Naive thymus-derived CD4-positive, alpha-beta T cell (primary cell): ENCODE measurements at regions of chr2 and their contacts with region 1.

Region 1: DNA sequence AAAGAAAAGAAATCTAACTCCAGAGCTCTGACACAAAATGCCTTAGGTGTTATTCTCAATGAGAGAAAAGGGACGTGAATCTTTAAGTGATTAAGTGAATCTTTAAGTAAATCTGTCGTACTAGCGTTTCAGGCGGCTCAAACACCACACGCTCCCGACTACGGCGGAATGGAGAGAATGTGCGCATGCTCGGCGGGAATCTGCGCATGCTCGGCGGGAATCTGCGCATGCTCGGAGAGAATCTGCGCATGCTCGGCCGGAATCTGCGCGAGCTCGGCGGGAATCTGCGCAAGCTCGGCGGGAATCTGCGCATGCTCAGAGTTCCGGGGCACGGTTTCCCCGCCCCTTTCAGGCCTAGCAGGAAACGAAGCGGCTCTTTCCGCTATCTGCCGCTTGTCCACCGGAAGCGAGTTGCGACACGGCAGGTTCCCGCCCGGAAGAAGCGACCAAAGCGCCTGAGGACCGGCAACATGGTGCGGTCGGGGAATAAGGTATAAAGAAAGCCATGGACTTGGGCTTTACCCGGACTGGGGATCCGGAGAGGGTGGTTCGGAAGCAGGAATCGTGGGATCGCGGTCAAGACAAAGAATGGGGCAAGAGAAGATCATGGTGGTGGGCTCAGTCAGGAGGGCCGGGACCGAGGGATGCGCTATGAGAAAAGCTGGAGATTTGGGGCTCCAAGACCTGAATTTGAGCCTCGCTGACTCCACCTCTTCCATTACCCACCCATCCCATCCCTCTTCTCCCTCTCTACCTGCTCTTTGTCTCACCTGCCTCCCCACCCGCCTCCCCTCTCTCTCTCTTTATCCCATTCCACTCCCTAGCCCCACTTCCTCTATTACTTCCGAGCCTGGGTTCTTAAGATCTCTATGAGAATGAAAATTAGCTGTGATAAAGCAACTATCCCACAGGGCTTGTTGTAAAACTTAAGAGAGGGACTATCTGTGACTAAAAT is at the start of gene XRCC5:
- DNase-seq: peak; percentile 95 to 97 (median 97)
- ATAC-seq: peak; percentile 93
- H3K4me3 ChIP-seq: peak within 1 kb of the TSS; percentile 96
- H3K4me3 Mint-ChIP-seq: peak within 1 kb of the TSS; percentile 96 to 100 (median 100)
- H3K27ac ChIP-seq: peak within 1 kb of the TSS; percentile 95
- H3K27ac Mint-ChIP-seq: peak within 1 kb of the TSS; percentile 97 to 100 (median 100)
- H3K4me1 ChIP-seq: peaks cover 24 to 30% of the 10 kb centered on the region in 2 donors
- H3K4me1 Mint-ChIP-seq: peaks cover 20 to 57% (median 52%) of the 10 kb centered on the region in 7 donors
- H3K27me3 ChIP-seq: no peaks in the 10 kb centered on the region
- H3K27me3 Mint-ChIP-seq: peaks cover 0 to 4% (median 0%) of the 10 kb centered on the region in 5 donors
- total RNA-seq, gene XRCC5: 168 to 347 (median 228) TPM

Region 2: GRCh38 chr2:216034065-216034464 is 75.2 kb before region 1 on chr2:
- CTCF ChIA-PET with region 1: interaction called, 7 read pairs
- POLR2A ChIA-PET with region 1: interaction called, 3 read pairs
- intact Hi-C with region 1: loop called (anchors 1 kb)
- DNase-seq: peak; percentile 50 to 83 (median 69)
- ATAC-seq: peak; percentile 89
- H3K4me3 ChIP-seq: no peak overlapping the region
- H3K4me3 Mint-ChIP-seq: no peak overlapping the region
- H3K27ac ChIP-seq: no peak overlapping the region
- H3K27ac Mint-ChIP-seq: peak overlapping the region in 1 of 9 donors; percentile 13
- H3K4me1 ChIP-seq: peaks cover 0 to 10% of the 10 kb centered on the region in 2 donors
- H3K4me1 Mint-ChIP-seq: peaks cover 15 to 31% (median 25%) of the 10 kb centered on the region in 7 donors
- H3K27me3 ChIP-seq: no peaks in the 10 kb centered on the region
- H3K27me3 Mint-ChIP-seq: no peaks in the 10 kb centered on the region

Region 3: DNA sequence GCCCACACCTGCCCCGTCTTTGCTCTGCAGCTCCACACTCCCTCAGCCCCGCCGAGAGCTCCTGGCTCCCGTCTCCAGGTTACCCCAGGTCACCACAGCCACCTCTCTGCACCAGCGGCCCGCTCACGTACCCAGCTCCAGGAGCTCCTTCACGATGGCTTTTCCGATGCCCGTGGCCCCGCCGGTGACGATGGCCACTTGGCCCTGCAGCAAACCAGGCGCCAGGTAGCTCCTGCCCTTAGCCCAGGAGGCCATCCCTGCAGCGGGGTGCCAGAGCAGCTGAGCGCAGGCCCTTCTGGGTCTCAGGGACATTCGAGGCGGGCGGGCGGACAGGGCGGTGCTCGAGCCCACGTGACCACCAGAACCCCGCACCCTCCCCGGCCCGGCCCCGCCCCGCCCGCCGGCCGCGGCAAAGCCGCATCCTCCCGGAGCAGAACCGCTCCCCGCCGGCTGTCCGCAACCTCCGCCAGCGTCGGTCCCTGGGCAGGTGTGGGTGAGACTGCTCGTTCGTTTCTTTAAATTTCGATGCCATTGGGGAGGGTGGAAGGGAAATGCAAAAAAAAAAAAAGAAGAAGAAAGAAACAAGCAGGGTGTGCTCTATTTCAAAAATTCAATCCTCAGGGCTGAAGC is 27.6 kb before region 1 on chr2 and contains the starts of genes PECR and TMEM169:
- CTCF ChIA-PET with region 1: interaction called, 14 read pairs
- POLR2A ChIA-PET with region 1: interaction called, 166 read pairs
- intact Hi-C with region 1: loop called (anchors 1 kb)
- DNase-seq: peak; percentile 39 to 81 (median 62)
- ATAC-seq: peak; percentile 93
- H3K4me3 ChIP-seq: peak within 1 kb of the TSS; percentile 95
- H3K4me3 Mint-ChIP-seq: peak within 1 kb of the TSS; percentile 76 to 97 (median 94)
- H3K27ac ChIP-seq: peak within 1 kb of the TSS; percentile 77
- H3K27ac Mint-ChIP-seq: peak within 1 kb of the TSS; percentile 86 to 97 (median 95)
- H3K4me1 ChIP-seq: peaks cover 42 to 57% of the 10 kb centered on the region in 2 donors
- H3K4me1 Mint-ChIP-seq: peaks cover 47 to 76% (median 62%) of the 10 kb centered on the region in 7 donors
- H3K27me3 ChIP-seq: no peaks in the 10 kb centered on the region
- H3K27me3 Mint-ChIP-seq: no peaks in the 10 kb centered on the region
- total RNA-seq, gene PECR: 15.7 to 29.9 (median 20.6) TPM
- total RNA-seq, gene TMEM169: 2.0 to 5.1 (median 2.6) TPM

Region 4: DNA sequence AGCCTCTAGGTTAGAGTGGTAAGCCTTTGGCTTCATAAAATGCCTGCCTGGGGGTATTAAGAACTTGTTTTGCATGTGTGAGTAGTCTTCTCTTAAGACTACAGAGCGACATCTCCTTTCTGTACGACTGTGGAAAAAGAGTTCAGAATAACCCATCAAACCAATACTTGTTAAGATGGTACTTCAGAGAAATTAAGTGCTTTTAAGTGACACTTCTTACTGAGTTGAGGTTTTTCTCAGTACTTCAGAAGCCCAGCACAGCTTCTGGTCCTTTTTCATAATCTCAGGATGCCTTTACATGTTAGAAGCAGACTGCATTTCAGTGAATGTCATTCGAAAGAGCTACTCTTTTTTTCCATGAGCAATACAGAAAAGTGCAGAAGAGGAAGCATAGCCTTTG is 10.7 kb after region 1 on chr2:
- CTCF ChIA-PET with region 1: interaction called, 5 read pairs
- POLR2A ChIA-PET with region 1: interaction called, 13 read pairs
- intact Hi-C with region 1: loop called in 1 of 2 experiments (anchors 1 kb)
- DNase-seq: peak in 6 of 9 donors; percentile 19 to 64 (median 48)
- ATAC-seq: peak; percentile 75
- H3K4me3 ChIP-seq: no peak overlapping the region
- H3K4me3 Mint-ChIP-seq: peak overlapping the region; percentile 6 to 99 (median 60)
- H3K27ac ChIP-seq: peak overlapping the region; percentile 47
- H3K27ac Mint-ChIP-seq: peak overlapping the region; percentile 70 to 90 (median 86)
- H3K4me1 ChIP-seq: peaks cover 12 to 41% of the 10 kb centered on the region in 2 donors
- H3K4me1 Mint-ChIP-seq: peaks cover 48 to 94% (median 87%) of the 10 kb centered on the region in 7 donors
- H3K27me3 ChIP-seq: no peaks in the 10 kb centered on the region
- H3K27me3 Mint-ChIP-seq: no peaks in the 10 kb centered on the region

Region 5: GRCh38 chr2:216404010-216404618 is 294.9 kb after region 1 on chr2:
- CTCF ChIA-PET with region 1: no interaction called
- POLR2A ChIA-PET with region 1: no interaction called
- intact Hi-C with region 1: loop called (anchors 1 kb)
- DNase-seq: peak in 8 of 9 donors; percentile 17 to 57 (median 38)
- ATAC-seq: peak; percentile 80
- H3K4me3 ChIP-seq: no peak overlapping the region
- H3K4me3 Mint-ChIP-seq: no peak overlapping the region
- H3K27ac ChIP-seq: no peak overlapping the region
- H3K27ac Mint-ChIP-seq: no peak overlapping the region
- H3K4me1 ChIP-seq: no peaks in the 10 kb centered on the region
- H3K4me1 Mint-ChIP-seq: peaks cover 0 to 12% (median 2%) of the 10 kb centered on the region in 7 donors
- H3K27me3 ChIP-seq: no peaks in the 10 kb centered on the region
- H3K27me3 Mint-ChIP-seq: peaks cover 0 to 37% (median 3%) of the 10 kb centered on the region in 5 donors